Activated B cell treated with CpG ODN at 0.5 μM for 24 hours (primary cell): ENCODE measurements at regions of chr6 and their contacts with region 1.

Region 1: GRCh38 chr6:53064726-53065215 is 433 bp upstream of the FBXO9 start:
- DNase-seq: peak; percentile 82
- ATAC-seq: peak; percentile 81
- H3K4me3 Mint-ChIP-seq: peak overlapping the region; percentile 100
- H3K27ac Mint-ChIP-seq: peak overlapping the region; percentile 99
- H3K4me1 Mint-ChIP-seq: peaks cover 57% of the 10 kb centered on the region
- H3K27me3 Mint-ChIP-seq: no peaks in the 10 kb centered on the region
- CTCF ChIP-seq: no peak

Region 2: GRCh38 chr6:53615633-53616449 is 551.1 kb after region 1 on chr6:
- CTCF ChIA-PET with region 1: no interaction called
- POLR2A ChIA-PET with region 1: no interaction called
- intact Hi-C with region 1: no loop called
- DNase-seq: no peak
- ATAC-seq: no peak
- H3K4me3 Mint-ChIP-seq: no peak overlapping the region
- H3K27ac Mint-ChIP-seq: no peak overlapping the region
- H3K4me1 Mint-ChIP-seq: no peaks in the 10 kb centered on the region
- H3K27me3 Mint-ChIP-seq: peaks cover 6% of the 10 kb centered on the region
- CTCF ChIP-seq: no peak

Region 3: GRCh38 chr6:53794720-53795253 is 730.0 kb after region 1 on chr6 and contains the start of gene LRRC1:
- CTCF ChIA-PET with region 1: no interaction called
- POLR2A ChIA-PET with region 1: interaction called, 4 read pairs
- intact Hi-C with region 1: loop called (anchors 1 kb)
- DNase-seq: peak; percentile 94
- ATAC-seq: peak; percentile 76
- H3K4me3 Mint-ChIP-seq: peak within 1 kb of the TSS; percentile 99
- H3K27ac Mint-ChIP-seq: peak within 1 kb of the TSS; percentile 91
- H3K4me1 Mint-ChIP-seq: peaks cover 27% of the 10 kb centered on the region
- H3K27me3 Mint-ChIP-seq: peaks cover 2% of the 10 kb centered on the region
- CTCF ChIP-seq: no peak
- total RNA-seq, gene LRRC1: 3.0 and 4.7 TPM in 2 replicates